Mammary epithelial cell (primary cell): ENCODE measurements at regions of chr10 and their contacts with region 1.

Region 1: DNA sequence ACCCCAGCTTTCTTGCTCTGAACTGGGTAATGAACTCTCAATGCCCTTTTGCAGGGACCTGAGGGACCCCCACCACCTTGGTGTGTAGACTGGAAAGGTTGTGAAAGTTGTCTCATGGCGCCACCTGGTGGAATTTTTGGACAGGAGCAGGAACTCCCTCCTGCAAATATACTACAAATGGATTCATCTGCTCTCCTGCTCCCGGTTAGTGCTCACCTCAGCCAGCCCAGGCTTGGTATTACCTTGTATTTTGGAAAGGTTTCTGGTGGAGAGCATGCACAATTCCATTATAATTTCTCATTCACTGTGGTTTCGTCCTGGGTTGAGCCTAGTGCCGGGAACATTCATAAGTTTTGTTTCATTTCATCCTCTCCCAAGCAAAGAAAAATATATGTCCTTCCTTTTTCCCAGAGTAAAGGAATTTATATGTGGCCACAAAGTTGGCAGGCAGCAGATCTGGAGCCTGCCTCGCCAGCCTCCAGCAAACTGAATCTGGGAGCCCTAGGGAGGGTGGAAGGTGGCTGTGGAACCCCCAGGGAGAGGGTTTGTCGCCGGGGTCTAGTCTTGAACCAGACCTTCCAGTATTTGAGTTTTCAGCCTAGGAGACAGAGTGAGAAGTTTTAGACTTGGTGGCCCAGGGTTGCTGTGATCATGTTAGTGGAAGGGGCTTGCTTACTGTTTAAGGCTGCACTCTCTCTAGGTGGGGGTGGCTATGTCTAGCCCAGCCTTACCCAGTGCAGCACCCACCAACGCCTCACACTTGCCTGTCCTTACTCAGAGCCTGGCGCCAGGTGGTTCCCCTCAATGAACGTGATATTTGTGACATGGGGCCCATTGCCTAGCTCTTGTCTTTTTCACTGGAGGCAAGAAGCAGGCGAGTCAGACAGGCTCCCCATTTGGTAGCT is 9.5 kb downstream of the FAM241B start:
- DNase-seq: peak; percentile 57
- H3K4me3 ChIP-seq: no peak overlapping the region
- H3K27ac ChIP-seq: peak overlapping the region; percentile 38
- H3K4me1 ChIP-seq: peaks cover 29% of the 10 kb centered on the region
- H3K27me3 ChIP-seq: no peaks in the 10 kb centered on the region
- CTCF ChIP-seq: peak; percentile 81 to 90

Region 2: DNA sequence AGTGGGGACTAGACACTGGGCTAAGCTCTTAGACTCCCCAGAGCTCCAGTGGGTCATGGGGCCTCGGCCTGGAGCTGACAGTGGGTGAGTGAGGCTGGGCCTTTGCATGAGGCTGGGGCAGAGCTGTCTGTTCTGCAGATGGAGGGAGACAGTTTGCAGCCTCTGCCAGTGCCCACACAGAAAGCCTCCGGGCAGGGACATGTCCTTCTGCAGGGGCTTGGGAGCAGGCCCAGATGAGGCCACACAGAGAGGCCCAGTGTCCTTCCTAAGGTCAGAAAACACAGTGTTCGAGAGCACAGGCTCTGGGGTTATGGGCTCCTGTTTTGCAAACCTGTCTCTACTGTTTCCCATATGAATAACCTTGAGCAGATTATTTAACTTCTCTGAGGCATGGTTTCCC is 386.4 kb before region 1 on chr10:
- CTCF ChIA-PET with region 1: no interaction called
- dilution Hi-C with region 1: loop called (anchors 10 kb)
- in situ Hi-C with region 1: no loop called
- intact Hi-C with region 1: no loop called
- DNase-seq: no peak
- H3K4me3 ChIP-seq: no peak overlapping the region
- H3K27ac ChIP-seq: no peak overlapping the region
- H3K4me1 ChIP-seq: peaks cover 6% of the 10 kb centered on the region
- H3K27me3 ChIP-seq: no peaks in the 10 kb centered on the region
- CTCF ChIP-seq: no peak

Region 3: GRCh38 chr10:69439813-69440506 is 199.6 kb before region 1 on chr10:
- CTCF ChIA-PET with region 1: no interaction called
- dilution Hi-C with region 1: no loop called
- in situ Hi-C with region 1: loop called in 1 of 2 experiments (anchors 10 kb)
- intact Hi-C with region 1: no loop called
- DNase-seq: peak; percentile 53
- H3K4me3 ChIP-seq: no peak overlapping the region
- H3K27ac ChIP-seq: no peak overlapping the region
- H3K4me1 ChIP-seq: peaks cover 31% of the 10 kb centered on the region
- H3K27me3 ChIP-seq: no peaks in the 10 kb centered on the region
- CTCF ChIP-seq: no peak

Region 4: GRCh38 chr10:69716711-69717560 is 77.4 kb after region 1 on chr10:
- CTCF ChIA-PET with region 1: interaction called, 9 read pairs
- dilution Hi-C with region 1: no loop called
- in situ Hi-C with region 1: loop called in 1 of 2 experiments (anchors 5 kb)
- intact Hi-C with region 1: loop called (anchors 1 kb)
- DNase-seq: peak; percentile 46
- H3K4me3 ChIP-seq: no peak overlapping the region
- H3K27ac ChIP-seq: no peak overlapping the region
- H3K4me1 ChIP-seq: peaks cover 3% of the 10 kb centered on the region
- H3K27me3 ChIP-seq: no peaks in the 10 kb centered on the region
- CTCF ChIP-seq: peak; percentile 85 to 88